Activated CD8-positive, alpha-beta memory T cell treated with anti-CD3 and anti-CD28 coated beads, Interleukin-2, amount 10 ng/mL, durations not matched to agents 7 days and 5 days (primary cell): ENCODE measurements at regions of chr11 and their contacts with region 1.

Region 1: DNA sequence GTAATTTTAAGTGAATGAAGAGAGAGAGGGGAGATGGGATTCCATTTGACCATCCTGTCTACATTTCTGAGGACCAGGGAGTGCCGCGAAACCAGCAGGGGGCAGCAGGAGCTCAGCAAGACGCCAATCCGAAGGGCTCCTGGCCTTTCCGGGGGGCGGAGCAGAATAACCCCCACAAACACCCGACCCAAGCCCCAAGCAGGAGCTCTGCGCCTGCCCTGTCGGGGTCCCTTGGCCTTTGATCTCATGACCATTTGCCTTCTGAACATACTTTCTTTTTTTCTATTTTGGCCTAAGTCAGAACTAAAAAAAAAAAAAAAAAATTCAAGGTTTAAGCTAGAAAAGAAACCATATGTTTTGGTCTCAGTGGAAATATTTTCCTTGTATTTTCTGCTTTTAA is 21.9 kb upstream of the SCN2B start:
- DNase-seq: peak; percentile 92
- ATAC-seq: peak; percentile 40
- H3K4me3 Mint-ChIP-seq: no peak overlapping the region
- H3K27ac Mint-ChIP-seq: peak overlapping the region; percentile 78
- H3K4me1 Mint-ChIP-seq: peaks cover 14% of the 10 kb centered on the region
- H3K27me3 Mint-ChIP-seq: no peaks in the 10 kb centered on the region

Region 2: GRCh38 chr11:118227865-118228785 is 29.8 kb after region 1 on chr11:
- CTCF ChIA-PET with region 1: interaction called, 48 read pairs
- DNase-seq: peak; percentile 85
- ATAC-seq: peak; percentile 35
- H3K4me3 Mint-ChIP-seq: peak overlapping the region; percentile 65
- H3K27ac Mint-ChIP-seq: peak overlapping the region; percentile 97
- H3K4me1 Mint-ChIP-seq: peaks cover 54% of the 10 kb centered on the region
- H3K27me3 Mint-ChIP-seq: no peaks in the 10 kb centered on the region

Region 3: DNA sequence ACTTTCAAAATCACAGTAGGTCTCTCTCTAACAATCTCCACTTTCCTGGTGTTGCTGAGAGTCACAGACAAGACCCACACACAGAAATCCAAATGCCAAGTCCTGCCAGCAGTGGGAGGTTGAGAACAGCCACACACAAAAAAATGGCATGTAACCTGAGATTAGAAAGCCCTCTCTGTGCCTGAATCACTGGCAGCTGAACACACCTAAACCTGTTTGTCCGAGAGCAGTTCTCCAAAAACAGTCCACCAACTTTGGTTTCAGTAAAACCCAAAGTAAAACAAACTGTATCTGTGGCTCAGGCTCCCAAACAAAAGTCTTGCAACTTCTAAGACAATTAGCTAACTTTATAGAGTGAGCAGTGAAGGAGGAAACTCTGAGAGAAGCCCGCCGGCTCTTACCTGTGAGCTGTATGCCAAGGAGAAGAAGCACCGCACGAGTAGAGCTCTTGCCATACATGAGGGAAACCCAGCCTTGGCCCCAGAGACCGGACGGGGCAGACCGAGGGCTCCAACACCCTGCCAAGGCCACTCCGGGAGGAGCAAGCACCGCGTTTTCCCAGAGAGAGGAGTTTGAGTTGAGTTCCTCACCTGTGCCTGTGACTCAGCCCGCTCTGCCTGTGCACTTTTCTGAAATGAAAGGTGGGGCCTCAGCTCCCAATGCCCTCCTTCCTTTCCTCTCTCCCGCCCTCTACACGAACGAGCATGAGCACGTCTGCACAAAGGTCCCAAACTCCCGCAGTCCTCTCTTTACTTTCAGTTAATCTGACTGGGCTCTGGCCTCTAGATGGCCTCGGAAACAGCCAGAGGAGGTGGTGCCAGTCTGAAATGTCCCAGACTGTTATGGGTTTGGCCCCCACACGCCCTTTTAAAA is 65.6 kb after region 1 on chr11 and contains the start of gene MPZL2:
- CTCF ChIA-PET with region 1: interaction called, 59 read pairs
- DNase-seq: peak; percentile 46
- ATAC-seq: peak; percentile 53
- H3K4me3 Mint-ChIP-seq: peak within 1 kb of the TSS; percentile 69
- H3K27ac Mint-ChIP-seq: peak within 1 kb of the TSS; percentile 2
- H3K4me1 Mint-ChIP-seq: peaks cover 46% of the 10 kb centered on the region
- H3K27me3 Mint-ChIP-seq: peaks cover 16% of the 10 kb centered on the region
- total RNA-seq, gene MPZL2: 3.0 to 3.2 TPM

Region 4: GRCh38 chr11:118290923-118291322 is 92.6 kb after region 1 on chr11:
- CTCF ChIA-PET with region 1: interaction called, 33 read pairs
- DNase-seq: peak; percentile 66
- ATAC-seq: peak; percentile 72
- H3K4me3 Mint-ChIP-seq: no peak overlapping the region
- H3K27ac Mint-ChIP-seq: no peak overlapping the region
- H3K4me1 Mint-ChIP-seq: peaks cover 20% of the 10 kb centered on the region
- H3K27me3 Mint-ChIP-seq: no peaks in the 10 kb centered on the region

Region 5: DNA sequence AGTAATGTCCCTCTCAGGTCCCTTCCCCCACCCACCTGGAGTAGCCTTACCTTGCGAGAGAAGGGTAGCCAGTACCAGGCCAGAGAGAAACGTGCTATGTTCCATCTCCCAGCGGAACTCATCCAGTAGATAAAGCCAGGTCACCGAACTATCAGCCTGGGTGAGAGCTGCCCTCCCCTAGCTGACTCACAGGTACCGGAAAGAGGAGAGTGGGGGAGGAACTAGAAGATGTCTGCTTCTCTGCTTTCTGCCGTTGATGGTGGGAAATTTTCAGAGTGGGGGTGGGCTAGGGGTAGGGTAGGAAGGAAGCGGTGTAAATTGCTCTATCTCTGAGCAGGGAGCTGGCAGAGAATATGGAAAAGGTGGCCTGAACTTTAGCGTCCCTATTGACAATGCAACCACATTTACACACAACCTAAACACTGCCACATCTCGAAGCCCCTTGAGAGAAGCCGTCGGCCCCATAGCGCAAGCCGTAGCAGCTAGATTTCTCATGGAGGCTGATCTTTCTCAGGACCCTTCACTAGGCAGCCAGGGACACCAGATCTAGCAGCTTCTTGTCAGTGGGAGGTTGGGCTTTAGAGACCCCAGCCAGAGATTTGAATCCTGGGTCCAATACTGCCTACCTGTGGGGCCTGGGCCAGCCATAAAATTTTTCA is 144.3 kb after region 1 on chr11 and contains the start of gene CD3D:
- CTCF ChIA-PET with region 1: interaction called, 11 read pairs
- DNase-seq: peak; percentile 84
- ATAC-seq: peak; percentile 47
- H3K4me3 Mint-ChIP-seq: peak within 1 kb of the TSS; percentile 87
- H3K27ac Mint-ChIP-seq: peak within 1 kb of the TSS; percentile 97
- H3K4me1 Mint-ChIP-seq: peaks cover 68% of the 10 kb centered on the region
- H3K27me3 Mint-ChIP-seq: no peaks in the 10 kb centered on the region
- total RNA-seq, gene CD3D: 428 to 526 TPM